Posterior vena cava (tissue), 2 donors: ENCODE measurements at regions of chr14 and their contacts with region 1.

Region 1: DNA sequence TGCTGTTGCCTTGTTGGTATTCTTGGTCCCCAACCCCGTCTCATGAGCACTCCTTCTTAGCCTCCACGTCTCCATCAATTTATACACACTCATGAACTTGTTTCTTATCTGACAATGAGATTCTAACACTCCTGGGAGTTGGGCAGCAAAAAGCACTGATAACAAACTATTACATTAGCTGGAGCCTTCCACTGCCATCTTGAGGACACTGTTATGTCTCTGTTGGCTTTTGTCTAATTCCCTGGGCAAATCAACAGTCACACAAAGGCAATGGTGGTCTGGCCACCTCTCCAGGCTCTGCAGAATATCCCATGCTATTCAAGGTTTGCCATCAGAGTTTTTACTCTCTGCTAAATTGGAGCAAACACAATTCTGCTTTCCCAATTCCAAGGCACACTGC is 117.8 kb upstream of the COCH start:
- DNase-seq: no peak

Region 2: GRCh38 chr14:29536886-29537511 is 1219.6 kb before region 1 on chr14:
- intact Hi-C with region 1: loop called in 1 of 2 experiments (anchors 5 kb)
- DNase-seq: no peak

Region 3: GRCh38 chr14:30725763-30726162 is 30.8 kb before region 1 on chr14:
- intact Hi-C with region 1: no loop called
- DNase-seq: no peak

Region 4: GRCh38 chr14:31166271-31166710 is 409.7 kb after region 1 on chr14:
- intact Hi-C with region 1: no loop called
- DNase-seq: no peak